Gastrocnemius medialis (tissue), 4 donors: ENCODE measurements at regions of chr1 and their contacts with region 1.

Region 1: DNA sequence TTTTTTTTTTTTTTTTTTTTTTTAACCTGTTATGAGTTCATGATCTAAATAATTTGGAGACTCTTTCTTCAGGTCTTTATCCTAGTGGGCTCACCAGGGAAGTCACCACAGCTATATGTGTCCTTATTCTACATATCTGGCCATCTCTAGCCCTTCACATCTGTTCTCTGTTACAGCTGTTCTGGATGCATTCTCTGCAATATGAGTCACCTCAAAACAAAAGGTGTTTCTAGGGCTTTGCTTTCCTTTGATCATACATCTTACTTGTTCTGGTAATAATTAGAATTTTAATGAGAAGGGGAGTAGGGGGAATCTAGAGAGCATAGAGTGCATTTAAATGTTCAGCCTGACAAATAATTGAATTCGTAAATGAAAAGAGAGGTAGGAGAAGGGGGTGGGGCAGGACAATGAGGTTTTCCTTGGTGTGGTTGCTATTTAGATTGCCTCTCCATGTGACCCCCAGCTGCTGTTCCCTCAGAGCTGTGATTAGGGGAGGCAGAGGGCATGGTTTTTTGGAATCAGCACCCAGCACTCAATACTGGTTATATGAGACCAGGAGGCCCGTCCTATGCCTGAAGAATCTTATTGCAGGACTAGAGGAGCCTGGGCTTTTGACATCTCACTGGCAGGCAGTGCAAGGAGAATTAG is 8.0 kb downstream of the SYT6 start:
- DNase-seq: no peak
- ATAC-seq: no peak
- H3K4me3 ChIP-seq: no peak overlapping the region
- H3K27ac ChIP-seq: no peak overlapping the region
- H3K4me1 ChIP-seq: no peaks in the 10 kb centered on the region
- H3K27me3 ChIP-seq: peaks cover 0 to 9% (median 0%) of the 10 kb centered on the region in 3 donors
- CTCF ChIP-seq: no peak
- POLR2A ChIP-seq: no peak

Region 2: GRCh38 chr1:114053604-114054003 is 92.0 kb before region 1 on chr1:
- in situ Hi-C with region 1: no loop called
- intact Hi-C with region 1: loop called (anchors 10 kb)
- DNase-seq: no peak
- ATAC-seq: no peak
- H3K4me3 ChIP-seq: no peak overlapping the region
- H3K27ac ChIP-seq: no peak overlapping the region
- H3K4me1 ChIP-seq: no peaks in the 10 kb centered on the region
- H3K27me3 ChIP-seq: no peaks in the 10 kb centered on the region
- CTCF ChIP-seq: no peak
- POLR2A ChIP-seq: no peak

Region 3: GRCh38 chr1:114691061-114691460 is 545.4 kb after region 1 on chr1:
- in situ Hi-C with region 1: no loop called
- intact Hi-C with region 1: no loop called
- DNase-seq: peak in 1 of 2 donors; percentile 43
- ATAC-seq: peak; percentile 22 to 24
- H3K4me3 ChIP-seq: no peak overlapping the region
- H3K27ac ChIP-seq: peak overlapping the region; percentile 88 to 98 (median 91)
- H3K4me1 ChIP-seq: peaks cover 57 to 61% of the 10 kb centered on the region in 2 donors
- H3K27me3 ChIP-seq: no peaks in the 10 kb centered on the region
- CTCF ChIP-seq: no peak
- POLR2A ChIP-seq: no peak